CD14-positive monocyte (primary cell): ENCODE measurements at regions of chr15 and their contacts with region 1.

Region 1: GRCh38 chr15:93235926-93236780 is 147.1 kb upstream of the RGMA start:
- DNase-seq: peak; percentile 92 to 98 (median 94)
- H3K4me3 ChIP-seq: peak overlapping the region; percentile 25 to 64 (median 30)
- H3K4me3 Mint-ChIP-seq: peak overlapping the region; percentile 70 to 84
- H3K27ac ChIP-seq: peak overlapping the region; percentile 92 to 94
- H3K27ac Mint-ChIP-seq: peak overlapping the region; percentile 97 to 100 (median 99)
- H3K4me1 ChIP-seq: peaks cover 33 to 35% of the 10 kb centered on the region in 2 donors
- H3K4me1 Mint-ChIP-seq: peaks cover 36% of the 10 kb centered on the region
- H3K27me3 ChIP-seq: no peaks in the 10 kb centered on the region
- H3K27me3 Mint-ChIP-seq: peaks cover 0 to 2% (median 0%) of the 10 kb centered on the region in 3 donors
- CTCF ChIP-seq: no peak

Region 2: GRCh38 chr15:93179072-93179471 is 57.1 kb before region 1 on chr15:
- intact Hi-C with region 1: loop called in 1 of 2 experiments (anchors 10 kb)
- DNase-seq: peak; percentile 93 to 97 (median 95)
- H3K4me3 ChIP-seq: peak overlapping the region in 1 of 3 experiments; percentile 24
- H3K4me3 Mint-ChIP-seq: peak overlapping the region in 1 of 2 donors; percentile 37
- H3K27ac ChIP-seq: peak overlapping the region; percentile 72 to 77
- H3K27ac Mint-ChIP-seq: peak overlapping the region; percentile 77 to 93 (median 90)
- H3K4me1 ChIP-seq: peaks cover 22 to 23% of the 10 kb centered on the region in 2 donors
- H3K4me1 Mint-ChIP-seq: peaks cover 29% of the 10 kb centered on the region
- H3K27me3 ChIP-seq: no peaks in the 10 kb centered on the region
- H3K27me3 Mint-ChIP-seq: peaks cover 0 to 7% (median 3%) of the 10 kb centered on the region in 3 donors
- CTCF ChIP-seq: no peak

Region 3: GRCh38 chr15:93274257-93274656 is 38.1 kb after region 1 on chr15:
- intact Hi-C with region 1: no loop called
- DNase-seq: no peak
- H3K4me3 ChIP-seq: no peak overlapping the region
- H3K4me3 Mint-ChIP-seq: no peak overlapping the region
- H3K27ac ChIP-seq: no peak overlapping the region
- H3K27ac Mint-ChIP-seq: no peak overlapping the region
- H3K4me1 ChIP-seq: peaks cover 9 to 13% of the 10 kb centered on the region in 2 donors
- H3K4me1 Mint-ChIP-seq: peaks cover 18% of the 10 kb centered on the region
- H3K27me3 ChIP-seq: no peaks in the 10 kb centered on the region
- H3K27me3 Mint-ChIP-seq: peaks cover 4 to 10% (median 5%) of the 10 kb centered on the region in 3 donors
- CTCF ChIP-seq: no peak